ENCODE measurements at regions of chr3 and their contacts with region 1.

Region 1: DNA sequence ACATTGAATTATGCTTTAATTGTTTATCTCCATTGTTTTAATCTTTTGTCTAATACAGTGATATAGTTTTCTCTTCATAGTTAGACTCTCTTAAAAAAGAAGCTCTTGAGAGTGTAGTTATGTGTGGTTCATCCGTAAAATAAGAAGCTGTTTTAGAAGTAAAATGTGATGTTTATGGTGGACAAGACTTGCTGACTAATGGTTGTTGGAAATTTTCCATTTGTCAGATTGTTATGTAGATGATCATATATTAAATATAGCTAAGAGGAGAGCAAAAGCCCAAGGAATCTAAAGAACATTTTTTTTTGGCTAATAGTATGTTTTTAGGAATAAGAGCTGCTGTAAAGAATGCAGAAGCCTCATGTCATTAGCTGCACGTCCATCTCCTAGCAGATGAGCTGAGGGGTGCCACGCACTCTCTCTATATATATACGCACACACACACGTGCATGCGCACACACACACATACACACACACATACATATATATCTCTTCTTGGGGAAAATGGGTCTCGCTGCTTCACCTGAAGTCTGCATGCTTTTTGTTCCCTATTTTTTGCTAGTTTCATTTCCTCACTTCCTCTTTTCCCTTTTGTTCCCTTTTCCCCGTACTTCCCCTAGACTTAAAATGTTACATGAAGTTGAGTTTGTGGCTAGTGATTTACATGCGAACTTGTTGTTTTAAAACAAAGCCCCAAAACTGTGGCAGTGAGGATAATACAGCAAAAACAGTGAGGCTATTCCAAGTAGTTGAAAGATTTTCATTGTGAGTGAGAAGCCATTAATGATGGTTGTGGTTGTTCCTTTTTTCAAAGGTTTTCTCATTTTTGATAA is 107.8 kb downstream of the MBNL1 start:
- DNase-seq: peak; percentile 83 to 94 (median 93)
- H3K4me3 ChIP-seq: peak overlapping the region in 6 of 7 experiments; percentile 20 to 63 (median 43)
- H3K27ac ChIP-seq: peak overlapping the region; percentile 65 to 82
- H3K4me1 ChIP-seq: peaks cover 22 to 56% (median 46%) of the 10 kb centered on the region in 4 experiments
- H3K27me3 ChIP-seq: no peaks in the 10 kb centered on the region

Region 2: GRCh38 chr3:152352554-152352953 is 24.0 kb before region 1 on chr3:
- CTCF ChIA-PET with region 1: no interaction called
- POLR2A ChIA-PET with region 1: no interaction called
- DNase-seq: no peak
- H3K4me3 ChIP-seq: no peak overlapping the region
- H3K27ac ChIP-seq: no peak overlapping the region
- H3K4me1 ChIP-seq: peaks cover 0 to 18% (median 7%) of the 10 kb centered on the region in 4 experiments
- H3K27me3 ChIP-seq: no peaks in the 10 kb centered on the region

Region 3: DNA sequence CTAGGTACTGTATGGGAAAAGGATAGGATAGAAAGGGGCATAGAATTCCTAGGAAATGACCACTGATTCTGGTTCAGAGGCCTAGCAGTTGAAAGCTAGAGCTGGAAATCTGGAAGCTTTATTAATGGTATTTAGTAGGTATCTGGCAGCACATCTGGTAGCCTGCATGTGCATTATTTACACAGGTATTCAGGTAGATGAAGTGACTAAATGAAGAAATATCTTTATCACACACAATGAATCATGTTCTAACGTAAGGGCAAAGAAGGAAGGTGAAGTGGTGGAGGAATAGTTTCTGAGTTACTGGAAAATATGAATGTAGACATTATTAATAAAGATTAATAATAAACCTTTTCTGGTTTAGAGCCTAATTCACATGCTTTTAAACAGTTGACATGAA is 12.1 kb after region 1 on chr3:
- CTCF ChIA-PET with region 1: interaction called, 11 read pairs
- POLR2A ChIA-PET with region 1: no interaction called
- DNase-seq: no peak
- H3K4me3 ChIP-seq: peak overlapping the region in 1 of 7 experiments; percentile 1
- H3K27ac ChIP-seq: no peak overlapping the region
- H3K4me1 ChIP-seq: peaks cover 4 to 38% (median 10%) of the 10 kb centered on the region in 4 experiments
- H3K27me3 ChIP-seq: no peaks in the 10 kb centered on the region

Measured in common myeloid progenitor, CD34-positive (primary cell).